ENCODE measurements at regions of chr2 and their contacts with region 1.

Region 1: GRCh38 chr2:112254466-112255239 is at the start of gene ZC3H8:
- DNase-seq: peak; percentile 90 to 93
- ATAC-seq: peak; percentile 94 to 96
- H3K4me3 ChIP-seq: peak within 1 kb of the TSS; percentile 84 to 92 (median 88)
- H3K27ac ChIP-seq: peak within 1 kb of the TSS; percentile 92 to 96 (median 92)
- H3K4me1 ChIP-seq: peaks cover 12 to 15% of the 10 kb centered on the region in 2 donors
- H3K27me3 ChIP-seq: no peaks in the 10 kb centered on the region
- CTCF ChIP-seq: no peak
- POLR2A ChIP-seq: peak; percentile 91 to 92
- total RNA-seq, gene ZC3H8: 5.7 to 13.6 (median 8.0) TPM

Region 2: DNA sequence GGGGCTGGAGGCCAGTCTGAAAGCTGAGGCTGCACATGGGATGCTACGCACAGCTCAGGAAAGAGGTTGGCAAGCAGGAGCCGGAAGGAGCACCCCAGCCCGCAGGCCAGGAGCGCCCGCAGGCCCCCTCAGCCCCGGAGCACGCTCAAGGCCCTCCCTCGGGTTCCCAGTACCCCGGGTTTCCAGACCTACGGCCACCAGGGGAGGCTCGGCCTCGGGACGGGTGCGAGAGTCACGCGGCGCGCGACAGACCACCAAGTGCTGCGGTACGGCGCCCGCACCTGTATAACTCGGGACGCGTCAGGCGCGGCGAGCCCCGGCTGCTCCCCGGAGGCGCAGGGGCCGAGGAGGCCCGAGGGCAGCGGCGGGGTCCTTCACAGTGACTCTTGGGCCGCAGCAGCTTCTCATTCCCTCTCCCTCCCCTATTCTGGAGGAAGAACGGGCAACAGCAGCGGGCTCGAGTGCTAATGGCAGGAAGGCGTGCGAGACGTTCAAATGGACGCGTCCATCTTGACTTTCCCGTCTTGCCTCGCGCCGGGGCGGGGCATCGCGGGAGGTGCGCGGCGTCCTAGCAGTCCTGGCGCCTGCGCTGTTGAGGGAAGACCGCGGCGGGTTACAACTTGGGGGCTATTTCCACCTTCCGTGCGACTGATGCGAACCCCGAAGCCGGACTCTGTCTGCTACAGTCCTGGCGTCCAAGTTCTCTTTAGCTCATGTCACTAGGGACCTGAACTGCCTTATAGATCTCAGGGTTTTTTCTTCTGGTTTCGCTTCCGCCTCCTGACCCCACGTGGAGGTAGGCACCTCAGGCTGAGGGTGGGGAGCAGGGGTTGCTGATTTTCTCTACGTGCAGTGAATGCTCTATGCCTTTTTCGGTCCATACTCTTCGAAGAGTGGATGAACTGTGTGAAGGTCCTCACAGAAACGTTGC is 370.7 kb before region 1 on chr2 and contains the start of gene ANAPC1:
- in situ Hi-C with region 1: loop called in 1 of 4 experiments (anchors 25 kb)
- intact Hi-C with region 1: no loop called
- DNase-seq: peak; percentile 64 to 67
- ATAC-seq: peak; percentile 97 to 98
- H3K4me3 ChIP-seq: peak within 1 kb of the TSS; percentile 79 to 98 (median 91)
- H3K27ac ChIP-seq: peak within 1 kb of the TSS; percentile 83 to 89 (median 86)
- H3K4me1 ChIP-seq: peaks cover 7 to 18% of the 10 kb centered on the region in 2 donors
- H3K27me3 ChIP-seq: no peaks in the 10 kb centered on the region
- CTCF ChIP-seq: no peak
- POLR2A ChIP-seq: peak; percentile 42 to 57
- total RNA-seq, gene ANAPC1: 28.3 to 33.9 (median 30.8) TPM

Region 3: GRCh38 chr2:112275306-112275886 is 20.7 kb after region 1 on chr2 and contains the start of gene ZC3H6:
- in situ Hi-C with region 1: no loop called
- intact Hi-C with region 1: loop called (anchors 1 kb)
- DNase-seq: peak; percentile 98 to 99
- ATAC-seq: peak; percentile 93 to 94
- H3K4me3 ChIP-seq: peak within 1 kb of the TSS; percentile 88 to 97 (median 94)
- H3K27ac ChIP-seq: peak within 1 kb of the TSS; percentile 99 to 100 (median 100)
- H3K4me1 ChIP-seq: peaks cover 22 to 26% of the 10 kb centered on the region in 2 donors
- H3K27me3 ChIP-seq: no peaks in the 10 kb centered on the region
- CTCF ChIP-seq: peak in 4 of 5 experiments; percentile 32 to 49 (median 43)
- POLR2A ChIP-seq: peak; percentile 86 to 91
- total RNA-seq, gene ZC3H6: 6.3 to 15.1 (median 9.9) TPM

Region 4: GRCh38 chr2:112433932-112434730 is 179.5 kb after region 1 on chr2:
- in situ Hi-C with region 1: loop called in 2 of 4 experiments (anchors 25 kb)
- intact Hi-C with region 1: loop called (anchors 5 kb)
- DNase-seq: no peak
- ATAC-seq: no peak
- H3K4me3 ChIP-seq: peak overlapping the region in 1 of 4 donors; percentile 57
- H3K27ac ChIP-seq: no peak overlapping the region
- H3K4me1 ChIP-seq: no peaks in the 10 kb centered on the region
- H3K27me3 ChIP-seq: no peaks in the 10 kb centered on the region
- CTCF ChIP-seq: no peak
- POLR2A ChIP-seq: no peak

Region 5: DNA sequence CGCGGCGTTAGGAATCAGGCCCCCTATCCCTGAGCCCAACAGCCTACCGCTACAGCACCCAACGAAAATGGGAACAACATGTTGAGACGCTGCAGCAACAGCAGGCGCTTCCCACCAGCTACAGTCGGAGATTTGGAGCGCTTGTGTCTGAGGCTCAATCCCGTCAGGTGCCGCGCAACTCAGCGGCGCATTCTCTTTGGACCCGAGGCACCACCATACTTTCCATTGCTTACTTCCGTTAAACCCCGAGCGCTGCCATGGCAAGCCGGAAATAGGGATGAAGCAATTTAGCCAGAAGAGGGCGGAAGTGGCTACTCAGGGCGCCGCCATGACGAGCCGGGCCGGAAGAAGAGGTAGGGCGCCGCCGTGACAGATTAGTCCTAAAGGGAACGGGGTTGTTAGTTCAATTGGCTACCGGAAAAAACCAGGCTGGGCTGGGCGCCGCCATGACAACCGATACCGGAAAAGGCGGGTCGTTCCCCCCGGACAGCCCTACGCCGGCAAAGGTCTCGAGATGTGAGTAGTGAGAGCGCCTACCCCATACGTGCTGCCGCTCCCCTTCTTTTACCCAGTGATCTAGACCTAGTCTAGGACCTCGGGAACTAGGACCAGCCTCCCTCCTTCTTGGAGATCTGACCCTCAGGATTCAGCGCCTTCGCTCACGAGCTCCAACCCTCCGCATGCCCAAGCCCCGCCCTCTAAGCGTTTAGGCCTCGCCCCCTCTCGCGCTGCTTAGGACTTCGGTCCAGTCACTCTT is 329.7 kb after region 1 on chr2 and contains the start of gene CHCHD5:
- in situ Hi-C with region 1: loop called in 1 of 4 experiments (anchors 25 kb)
- intact Hi-C with region 1: loop called (anchors 2 kb)
- DNase-seq: peak; percentile 93 to 95
- ATAC-seq: peak; percentile 84
- H3K4me3 ChIP-seq: peak within 1 kb of the TSS; percentile 70 to 86 (median 76)
- H3K27ac ChIP-seq: peak within 1 kb of the TSS; percentile 93 to 99 (median 96)
- H3K4me1 ChIP-seq: peaks cover 39 to 40% of the 10 kb centered on the region in 2 donors
- H3K27me3 ChIP-seq: no peaks in the 10 kb centered on the region
- CTCF ChIP-seq: peak in 3 of 5 experiments; percentile 6 to 24 (median 21)
- POLR2A ChIP-seq: peak; percentile 72 to 78
- total RNA-seq, gene CHCHD5: 13.2 to 26.6 (median 24.1) TPM

Region 6: GRCh38 chr2:112626604-112627059 is 372.0 kb after region 1 on chr2:
- in situ Hi-C with region 1: no loop called
- intact Hi-C with region 1: no loop called
- DNase-seq: peak in 1 of 2 donors; percentile 42
- ATAC-seq: peak; percentile 51 to 58
- H3K4me3 ChIP-seq: peak overlapping the region in 2 of 4 donors; percentile 5 to 18
- H3K27ac ChIP-seq: peak overlapping the region; percentile 47 to 67 (median 61)
- H3K4me1 ChIP-seq: peaks cover 6 to 12% of the 10 kb centered on the region in 2 donors
- H3K27me3 ChIP-seq: peaks cover 4 to 9% (median 9%) of the 10 kb centered on the region in 3 donors
- CTCF ChIP-seq: peak; percentile 66 to 85 (median 80)
- POLR2A ChIP-seq: no peak